Caco-2 (cell line): ENCODE measurements at regions of chr4 and their contacts with region 1.

Region 1: DNA sequence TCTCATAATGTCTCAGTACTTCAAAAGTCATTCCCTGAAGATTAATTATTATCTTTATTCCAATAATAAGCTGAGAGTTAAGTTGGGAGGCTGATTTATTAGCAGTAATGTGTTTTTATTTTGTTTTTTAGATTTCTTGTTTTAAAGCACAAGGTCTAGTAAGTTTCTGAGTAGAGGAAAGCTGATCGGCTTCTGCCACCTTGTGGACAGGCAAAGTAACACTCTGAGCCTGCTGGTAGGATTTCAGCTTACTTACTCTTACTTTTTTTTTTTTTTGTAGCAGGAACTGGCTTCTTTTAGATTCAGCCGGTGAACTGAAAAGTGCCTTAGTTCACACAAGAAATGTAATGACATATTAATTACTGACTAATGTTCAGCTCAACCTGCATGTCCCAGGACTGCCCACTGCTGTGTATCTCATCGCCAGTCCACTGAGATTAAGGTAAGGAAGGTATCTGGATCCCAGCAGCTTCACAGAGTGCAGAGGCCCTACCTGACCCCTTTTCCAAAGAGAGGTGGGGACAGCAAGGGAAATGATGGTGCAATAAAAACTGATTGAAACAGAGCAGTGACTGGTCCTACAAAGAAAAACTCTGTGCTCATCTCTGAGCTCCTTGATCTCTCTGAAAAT is 126.5 kb downstream of the ADGRA3 start:
- DNase-seq: peak; percentile 54 to 55
- H3K4me3 ChIP-seq: no peak overlapping the region
- H3K4me3 Mint-ChIP-seq: no peak overlapping the region
- H3K27ac Mint-ChIP-seq: no peak overlapping the region
- H3K4me1 ChIP-seq: no peaks in the 10 kb centered on the region
- H3K4me1 Mint-ChIP-seq: no peaks in the 10 kb centered on the region
- H3K27me3 ChIP-seq: no peaks in the 10 kb centered on the region
- H3K27me3 Mint-ChIP-seq: no peaks in the 10 kb centered on the region
- CTCF ChIP-seq: peak; percentile 69 to 79

Region 2: DNA sequence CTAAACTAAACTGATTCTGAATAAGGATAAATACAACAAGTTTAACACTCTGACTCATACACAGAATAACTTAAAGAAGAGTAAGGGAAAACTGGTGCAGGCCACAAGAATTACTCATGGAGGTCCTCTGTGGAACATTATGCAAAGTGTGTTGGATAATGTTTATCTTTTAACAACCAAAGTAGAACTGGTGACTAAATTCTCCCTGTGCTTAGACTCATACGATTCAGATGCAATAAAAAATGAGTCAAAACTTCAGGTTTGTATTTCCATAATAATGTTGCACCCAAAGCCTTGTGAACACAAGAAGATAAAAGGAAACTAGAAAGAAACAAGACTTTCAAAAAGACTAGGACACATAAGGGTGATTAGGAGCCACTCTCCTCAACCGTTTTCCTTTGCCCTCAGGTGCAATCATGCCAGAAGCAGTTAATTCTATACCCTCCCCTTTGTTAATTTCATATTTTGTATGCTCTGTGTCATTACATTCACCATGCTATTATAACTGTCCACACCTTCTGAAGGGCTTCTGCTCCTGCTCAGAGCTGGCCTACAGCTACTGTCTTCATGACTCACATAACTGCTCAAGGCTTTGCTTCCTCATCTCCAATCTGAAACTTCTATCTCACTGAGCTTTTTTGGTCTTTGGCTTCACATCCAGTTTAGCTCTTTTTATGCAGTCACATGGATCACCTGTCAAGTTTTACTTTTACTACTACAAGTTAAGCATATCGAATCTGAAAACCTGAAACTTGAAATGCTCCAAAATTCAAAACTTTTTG is 501.0 kb before region 1 on chr4:
- CTCF ChIA-PET with region 1: no interaction called
- POLR2A ChIA-PET with region 1: no interaction called
- intact Hi-C with region 1: loop called (anchors 10 kb)
- DNase-seq: no peak
- H3K4me3 ChIP-seq: no peak overlapping the region
- H3K4me3 Mint-ChIP-seq: no peak overlapping the region
- H3K27ac Mint-ChIP-seq: no peak overlapping the region
- H3K4me1 ChIP-seq: no peaks in the 10 kb centered on the region
- H3K4me1 Mint-ChIP-seq: no peaks in the 10 kb centered on the region
- H3K27me3 ChIP-seq: no peaks in the 10 kb centered on the region
- H3K27me3 Mint-ChIP-seq: no peaks in the 10 kb centered on the region
- CTCF ChIP-seq: no peak

Region 3: DNA sequence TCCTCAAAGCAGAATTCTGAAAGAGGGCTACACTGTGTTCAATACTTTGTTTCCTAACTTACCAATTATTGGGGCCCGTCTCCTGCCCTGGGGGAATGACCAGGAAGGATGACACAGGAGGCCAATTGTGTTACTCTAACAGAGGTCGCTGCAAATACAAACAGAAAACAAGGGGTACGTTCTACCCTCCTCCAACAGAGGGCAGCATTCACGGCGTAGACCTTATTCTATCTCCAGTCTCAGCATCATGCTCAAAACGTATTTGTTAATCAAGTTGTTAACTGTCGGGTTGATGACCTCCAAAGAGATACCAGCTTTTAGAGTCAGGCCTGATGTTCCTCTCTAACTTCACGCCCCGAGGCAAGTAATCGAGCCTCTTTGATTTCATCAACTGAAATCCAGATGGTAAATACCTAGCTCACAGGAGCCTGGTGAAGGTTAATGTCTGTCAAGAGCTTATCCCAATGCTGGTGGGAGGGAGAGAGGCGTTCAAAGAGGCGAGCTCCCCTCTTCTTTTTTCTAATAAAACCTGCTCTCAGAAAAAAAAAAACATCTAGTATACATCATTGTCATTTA is 259.8 kb before region 1 on chr4:
- CTCF ChIA-PET with region 1: interaction called, 3 read pairs
- POLR2A ChIA-PET with region 1: no interaction called
- intact Hi-C with region 1: loop called (anchors 2 kb)
- DNase-seq: peak; percentile 24 to 33
- H3K4me3 ChIP-seq: no peak overlapping the region
- H3K4me3 Mint-ChIP-seq: no peak overlapping the region
- H3K27ac Mint-ChIP-seq: no peak overlapping the region
- H3K4me1 ChIP-seq: no peaks in the 10 kb centered on the region
- H3K4me1 Mint-ChIP-seq: no peaks in the 10 kb centered on the region
- H3K27me3 ChIP-seq: no peaks in the 10 kb centered on the region
- H3K27me3 Mint-ChIP-seq: no peaks in the 10 kb centered on the region
- CTCF ChIP-seq: peak; percentile 24 to 35

Region 4: GRCh38 chr4:22237155-22237751 is 152.1 kb before region 1 on chr4:
- CTCF ChIA-PET with region 1: no interaction called
- POLR2A ChIA-PET with region 1: no interaction called
- intact Hi-C with region 1: loop called (anchors 5 kb)
- DNase-seq: peak in 1 of 2 experiments; percentile 34
- H3K4me3 ChIP-seq: no peak overlapping the region
- H3K4me3 Mint-ChIP-seq: no peak overlapping the region
- H3K27ac Mint-ChIP-seq: no peak overlapping the region
- H3K4me1 ChIP-seq: peaks cover 5% of the 10 kb centered on the region; the same call in 1 of the 2 replicates
- H3K4me1 Mint-ChIP-seq: no peaks in the 10 kb centered on the region
- H3K27me3 ChIP-seq: no peaks in the 10 kb centered on the region
- H3K27me3 Mint-ChIP-seq: peaks cover 6% of the 10 kb centered on the region
- CTCF ChIP-seq: peak in 1 of 2 experiments; percentile 47

Region 5: GRCh38 chr4:23260511-23260910 is 871.2 kb after region 1 on chr4:
- CTCF ChIA-PET with region 1: no interaction called
- POLR2A ChIA-PET with region 1: no interaction called
- intact Hi-C with region 1: no loop called
- DNase-seq: no peak
- H3K4me3 ChIP-seq: no peak overlapping the region
- H3K4me3 Mint-ChIP-seq: no peak overlapping the region
- H3K27ac Mint-ChIP-seq: no peak overlapping the region
- H3K4me1 ChIP-seq: no peaks in the 10 kb centered on the region
- H3K4me1 Mint-ChIP-seq: no peaks in the 10 kb centered on the region
- H3K27me3 ChIP-seq: no peaks in the 10 kb centered on the region
- H3K27me3 Mint-ChIP-seq: no peaks in the 10 kb centered on the region
- CTCF ChIP-seq: no peak